HCT116 (cell line): ENCODE measurements at regions of chr3 and their contacts with region 1.

Region 1: GRCh38 chr3:12822725-12823373 is 18.5 kb downstream of the RPL32 start:
- DNase-seq: peak; percentile 29
- ATAC-seq: peak; percentile 84
- H3K4me3 ChIP-seq: no peak overlapping the region
- H3K27ac ChIP-seq: no peak overlapping the region
- H3K4me1 ChIP-seq: no peaks in the 10 kb centered on the region
- H3K27me3 ChIP-seq: no peaks in the 10 kb centered on the region
- CTCF ChIP-seq: peak; percentile 40 to 56 (median 48); a peak in 5 of 6 replicates
- POLR2A ChIP-seq: no peak
- RAD21 ChIP-seq: peak; percentile 47; the same call in 1 of the 2 replicates

Region 2: GRCh38 chr3:12423918-12424630 is 398.8 kb before region 1 on chr3:
- CTCF ChIA-PET with region 1: no interaction called
- POLR2A ChIA-PET with region 1: no interaction called
- RAD21 ChIA-PET with region 1: no interaction called
- intact Hi-C with region 1: no loop called
- DNase-seq: no peak
- ATAC-seq: peak; percentile 71
- H3K4me3 ChIP-seq: no peak overlapping the region
- H3K27ac ChIP-seq: peak overlapping the region; percentile 37; the same call in 1 of the 2 replicates
- H3K4me1 ChIP-seq: peaks cover 27 to 30% of the 10 kb centered on the region in 2 experiments
- H3K27me3 ChIP-seq: no peaks in the 10 kb centered on the region
- CTCF ChIP-seq: no peak
- POLR2A ChIP-seq: no peak
- RAD21 ChIP-seq: no peak

Region 3: DNA sequence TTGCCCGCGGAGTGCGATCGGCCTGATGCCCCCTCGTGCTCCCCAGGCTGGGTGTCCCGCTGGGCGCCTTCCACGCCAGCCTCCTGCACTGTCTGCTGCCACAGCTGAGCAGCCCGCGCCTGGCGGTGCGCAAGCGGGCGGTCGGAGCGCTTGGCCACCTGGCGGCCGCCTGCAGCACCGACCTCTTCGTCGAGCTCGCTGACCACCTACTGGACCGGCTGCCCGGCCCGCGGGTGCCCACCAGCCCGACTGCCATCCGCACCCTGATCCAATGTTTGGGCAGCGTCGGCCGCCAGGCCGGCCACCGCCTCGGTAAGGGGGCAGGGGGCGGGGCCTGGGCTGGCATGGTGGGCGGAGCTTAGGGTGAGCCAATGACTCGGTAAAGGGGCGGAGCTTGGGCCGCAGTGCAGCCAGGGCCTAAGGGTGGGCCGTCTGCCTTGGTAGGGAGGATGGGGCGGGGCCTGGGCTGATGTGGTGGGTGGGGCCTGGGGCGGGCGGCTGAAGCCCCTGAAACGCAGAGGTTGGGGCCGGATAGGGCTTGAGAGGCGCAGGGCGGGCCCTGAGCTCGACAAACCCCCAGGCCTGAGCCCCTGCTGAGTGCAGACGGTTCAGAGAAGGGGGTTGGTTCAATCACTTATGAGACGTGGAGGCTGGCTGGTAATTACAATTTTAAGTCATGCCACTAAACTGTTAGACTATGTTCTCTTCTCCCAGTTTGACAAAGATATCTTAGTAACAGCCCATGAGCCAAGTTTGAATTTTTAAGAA is 12.7 kb before region 1 on chr3:
- CTCF ChIA-PET with region 1: interaction called, 22 read pairs
- POLR2A ChIA-PET with region 1: interaction called, 3 read pairs
- RAD21 ChIA-PET with region 1: no interaction called
- intact Hi-C with region 1: no loop called
- DNase-seq: peak; percentile 78
- ATAC-seq: peak; percentile 99
- H3K4me3 ChIP-seq: peak overlapping the region; percentile 44 to 57
- H3K27ac ChIP-seq: peak overlapping the region; percentile 32; the same call in 1 of the 2 replicates
- H3K4me1 ChIP-seq: peaks cover 9 to 16% of the 10 kb centered on the region in 2 experiments
- H3K27me3 ChIP-seq: no peaks in the 10 kb centered on the region
- CTCF ChIP-seq: peak in 2 of 3 experiments; percentile 74 to 81; a peak in 5 of 6 replicates
- POLR2A ChIP-seq: peak; percentile 52
- RAD21 ChIP-seq: peak; percentile 39; the same call in 1 of the 2 replicates

Region 4: DNA sequence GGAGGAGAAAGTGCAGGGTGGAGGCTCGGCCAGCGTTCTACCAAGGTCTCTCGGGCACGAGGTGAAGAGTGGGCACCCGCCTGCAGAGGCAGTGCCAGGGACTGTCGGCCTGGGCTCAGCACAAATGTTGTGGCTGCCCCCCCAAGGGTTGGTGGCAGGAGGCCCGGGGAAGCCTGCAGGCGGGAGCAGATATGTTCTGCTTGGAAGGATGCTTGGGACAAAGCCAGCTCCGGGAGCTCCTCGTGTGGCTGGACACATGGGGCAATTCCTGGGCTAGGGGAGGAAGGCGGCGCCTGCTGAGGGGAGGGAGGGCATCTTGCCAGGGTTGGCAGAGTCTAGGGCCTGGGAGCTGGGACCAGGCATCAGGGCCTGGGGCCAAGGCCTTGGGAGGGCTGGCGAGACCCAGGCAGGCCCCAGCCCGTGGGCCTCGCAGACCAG is 695.7 kb after region 1 on chr3:
- CTCF ChIA-PET with region 1: no interaction called
- POLR2A ChIA-PET with region 1: no interaction called
- RAD21 ChIA-PET with region 1: no interaction called
- intact Hi-C with region 1: no loop called
- DNase-seq: no peak
- ATAC-seq: no peak
- H3K4me3 ChIP-seq: no peak overlapping the region
- H3K27ac ChIP-seq: no peak overlapping the region
- H3K4me1 ChIP-seq: peaks cover 11 to 13% of the 10 kb centered on the region in 2 experiments
- H3K27me3 ChIP-seq: no peaks in the 10 kb centered on the region
- CTCF ChIP-seq: no peak
- POLR2A ChIP-seq: no peak
- RAD21 ChIP-seq: no peak